Left lung (tissue), 14 donors: ENCODE measurements at regions of chr19 and their contacts with region 1.

Region 1: GRCh38 chr19:36169084-36169760 is 17.0 kb upstream of the COX7A1 start:
- DNase-seq: no peak
- ATAC-seq: no peak
- H3K4me3 ChIP-seq: no peak overlapping the region
- H3K27ac ChIP-seq: peak overlapping the region in 1 of 2 donors; percentile 80
- H3K4me1 ChIP-seq: peaks cover 0 to 6% of the 10 kb centered on the region in 2 donors
- H3K27me3 ChIP-seq: no peaks in the 10 kb centered on the region
- CTCF ChIP-seq: no peak

Region 2: DNA sequence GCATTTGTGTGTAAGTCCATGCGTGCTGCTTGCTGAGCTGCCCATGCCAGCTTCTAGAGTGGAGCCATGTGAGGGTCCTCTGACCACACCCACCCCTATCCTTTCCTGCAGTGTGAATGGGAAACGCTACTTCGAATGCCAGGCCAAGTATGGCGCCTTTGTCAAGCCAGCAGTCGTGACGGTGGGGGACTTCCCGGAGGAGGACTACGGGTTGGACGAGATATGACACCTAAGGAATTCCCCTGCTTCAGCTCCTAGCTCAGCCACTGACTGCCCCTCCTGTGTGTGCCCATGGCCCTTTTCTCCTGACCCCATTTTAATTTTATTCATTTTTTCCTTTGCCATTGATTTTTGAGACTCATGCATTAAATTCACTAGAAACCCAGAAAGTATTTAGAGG is 43.7 kb before region 1 on chr19:
- intact Hi-C with region 1: loop called in 1 of 2 experiments (anchors 2 kb)
- DNase-seq: no peak
- ATAC-seq: no peak
- H3K4me3 ChIP-seq: no peak overlapping the region
- H3K27ac ChIP-seq: no peak overlapping the region
- H3K4me1 ChIP-seq: peaks cover 3 to 34% of the 10 kb centered on the region in 2 donors
- H3K27me3 ChIP-seq: no peaks in the 10 kb centered on the region
- CTCF ChIP-seq: no peak